Colonic mucosa (tissue), 4 donors: ENCODE measurements at regions of chr5 and their contacts with region 1.

Region 1: DNA sequence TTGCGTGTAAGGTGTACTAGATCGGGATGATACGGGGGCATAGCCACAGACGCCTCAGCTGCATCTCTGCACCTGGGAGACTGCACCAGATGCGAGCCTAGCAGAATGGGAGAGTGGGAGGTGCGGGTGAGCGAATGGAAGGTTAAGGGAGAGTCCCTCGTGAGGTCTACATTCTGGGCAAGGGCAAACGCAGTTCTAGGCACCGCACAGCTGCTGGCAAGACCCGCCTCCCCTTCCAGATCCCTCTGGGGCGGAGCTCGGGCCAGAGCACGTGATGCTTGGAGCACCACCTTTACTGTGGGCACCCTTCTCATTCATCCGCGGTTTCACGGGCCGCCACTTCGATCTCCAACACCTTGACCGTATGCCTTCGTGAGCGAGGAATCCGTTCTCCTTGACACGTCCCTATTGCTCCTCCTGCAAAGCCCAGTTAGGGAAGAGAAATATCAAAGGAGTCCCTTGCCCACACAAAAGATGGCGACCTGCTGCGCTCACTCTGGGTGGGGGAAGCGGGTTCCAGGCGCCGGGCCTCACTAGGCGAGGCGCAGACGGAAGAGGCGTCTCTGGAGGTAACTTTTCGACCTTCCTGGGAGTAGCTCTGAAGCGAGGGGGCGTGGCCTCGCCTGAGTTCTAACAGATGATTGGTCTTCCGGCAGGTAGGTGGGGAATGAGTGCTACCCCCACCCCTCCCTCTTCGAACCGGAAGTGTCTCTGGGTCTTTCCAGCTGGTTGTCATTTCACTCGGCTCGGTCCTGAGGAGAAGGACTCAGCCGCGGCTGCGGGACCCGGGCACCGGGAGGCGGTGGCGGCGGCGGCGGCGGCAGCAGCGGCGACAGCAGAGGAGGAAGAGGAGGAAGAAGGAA is at the start of gene CPEB4:
- DNase-seq: peak; percentile 99
- H3K4me3 ChIP-seq: peak within 1 kb of the TSS; percentile 80
- H3K27ac ChIP-seq: peak within 1 kb of the TSS; percentile 71
- H3K4me1 ChIP-seq: peaks cover 8% of the 10 kb centered on the region
- H3K27me3 ChIP-seq: no peaks in the 10 kb centered on the region
- CTCF ChIP-seq: no peak
- total RNA-seq, gene CPEB4: 23.3 to 41.7 TPM

Region 2: DNA sequence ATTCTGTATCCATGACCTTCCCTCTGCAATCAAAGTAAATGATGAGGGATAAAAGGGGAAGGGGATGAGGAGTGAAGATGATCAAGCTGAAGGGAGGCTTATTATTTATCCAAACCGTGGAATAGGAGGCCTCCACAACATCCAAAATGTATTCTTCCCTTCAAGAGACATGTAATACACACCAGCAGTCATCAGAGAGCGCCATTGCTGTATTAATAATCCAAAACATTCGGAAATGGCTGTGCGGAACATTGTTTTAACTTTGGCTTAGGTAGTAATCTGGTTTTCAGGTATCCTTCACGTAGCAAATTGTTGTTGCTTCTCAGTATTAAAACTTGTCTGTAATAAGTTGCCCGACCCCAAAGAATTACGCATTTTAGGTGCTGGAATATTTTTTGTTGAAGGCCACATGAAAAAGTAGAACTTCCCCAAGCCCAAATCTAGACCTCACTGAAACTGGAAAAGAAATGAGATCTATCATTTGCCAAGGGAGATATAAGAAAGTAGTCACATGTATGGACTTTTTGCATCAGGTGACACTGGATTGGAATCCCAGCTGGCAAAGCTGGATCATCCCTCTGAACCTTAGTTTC is 268.8 kb before region 1 on chr5:
- intact Hi-C with region 1: loop called (anchors 2 kb)
- DNase-seq: peak; percentile 57
- H3K4me3 ChIP-seq: no peak overlapping the region
- H3K27ac ChIP-seq: no peak overlapping the region
- H3K4me1 ChIP-seq: peaks cover 10% of the 10 kb centered on the region
- H3K27me3 ChIP-seq: no peaks in the 10 kb centered on the region
- CTCF ChIP-seq: peak; percentile 50

Region 3: GRCh38 chr5:173745123-173745522 is 142.7 kb before region 1 on chr5:
- intact Hi-C with region 1: no loop called
- DNase-seq: no peak
- H3K4me3 ChIP-seq: no peak overlapping the region
- H3K27ac ChIP-seq: no peak overlapping the region
- H3K4me1 ChIP-seq: no peaks in the 10 kb centered on the region
- H3K27me3 ChIP-seq: no peaks in the 10 kb centered on the region
- CTCF ChIP-seq: no peak

Region 4: DNA sequence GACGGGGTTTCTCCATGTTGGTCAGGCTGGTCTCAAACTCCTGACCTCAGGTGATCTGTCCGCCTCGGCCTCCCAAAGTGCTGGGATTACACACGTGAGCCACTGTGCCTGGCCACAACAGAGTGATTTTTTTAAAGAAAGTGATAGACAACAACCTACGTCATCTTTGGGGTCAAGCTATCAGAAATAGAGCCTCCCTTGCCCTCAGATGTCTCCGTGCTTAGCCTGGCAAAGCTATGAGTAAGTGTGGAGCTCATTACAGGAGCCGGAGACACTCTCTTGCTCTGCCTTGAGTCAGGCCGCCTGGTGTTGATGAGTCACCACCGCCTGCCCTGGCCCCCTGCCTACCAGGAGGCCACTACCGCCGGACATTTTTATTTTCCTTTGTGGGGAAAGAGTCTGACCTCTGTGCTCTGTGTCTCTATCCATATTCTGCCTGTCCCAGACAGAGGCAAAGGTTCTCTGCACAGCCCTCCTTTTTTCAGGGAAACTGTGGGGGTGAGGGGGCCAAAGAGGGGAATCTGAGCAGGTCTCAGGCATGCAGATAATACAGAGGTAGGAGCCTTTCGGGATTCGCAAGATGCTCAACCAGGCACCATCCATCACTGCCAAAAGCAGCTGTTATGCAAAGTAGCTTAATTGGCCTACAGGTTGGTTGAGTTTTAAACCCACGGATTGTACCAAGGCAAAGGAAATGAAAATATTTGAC is 123.4 kb before region 1 on chr5:
- intact Hi-C with region 1: loop called (anchors 10 kb)
- DNase-seq: peak; percentile 55
- H3K4me3 ChIP-seq: no peak overlapping the region
- H3K27ac ChIP-seq: no peak overlapping the region
- H3K4me1 ChIP-seq: no peaks in the 10 kb centered on the region
- H3K27me3 ChIP-seq: no peaks in the 10 kb centered on the region
- CTCF ChIP-seq: no peak

Region 5: DNA sequence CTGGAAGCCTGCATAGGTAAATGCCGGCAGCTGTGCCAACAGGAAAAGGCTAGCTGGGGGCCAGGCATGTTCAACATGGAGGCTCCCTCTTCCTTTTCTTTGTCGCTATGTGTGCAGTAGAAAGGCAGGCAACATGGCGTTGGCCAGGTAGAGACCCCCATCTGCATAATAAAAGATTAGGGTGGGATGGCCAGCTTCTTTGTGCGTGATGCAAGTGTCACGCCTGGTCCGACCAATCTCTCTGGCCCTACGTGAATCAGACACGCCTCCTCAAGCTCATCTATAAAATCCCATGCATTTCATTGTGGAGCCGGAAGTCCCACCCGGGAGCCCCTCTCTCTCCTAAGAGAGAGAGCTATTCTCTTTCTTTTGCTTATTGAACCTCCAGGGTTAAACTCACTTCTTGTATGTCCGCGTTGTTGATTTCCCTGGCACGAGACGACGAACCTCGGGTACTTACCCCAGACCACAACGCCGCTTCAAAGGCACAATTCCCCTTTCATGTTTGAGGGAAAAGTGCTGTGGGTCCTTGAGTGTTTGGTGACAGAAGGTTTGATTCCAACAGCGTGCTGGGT is 76.1 kb after region 1 on chr5:
- intact Hi-C with region 1: loop called (anchors 5 kb)
- DNase-seq: peak; percentile 49
- H3K4me3 ChIP-seq: peak overlapping the region; percentile 3
- H3K27ac ChIP-seq: no peak overlapping the region
- H3K4me1 ChIP-seq: no peaks in the 10 kb centered on the region
- H3K27me3 ChIP-seq: no peaks in the 10 kb centered on the region
- CTCF ChIP-seq: no peak

Region 6: DNA sequence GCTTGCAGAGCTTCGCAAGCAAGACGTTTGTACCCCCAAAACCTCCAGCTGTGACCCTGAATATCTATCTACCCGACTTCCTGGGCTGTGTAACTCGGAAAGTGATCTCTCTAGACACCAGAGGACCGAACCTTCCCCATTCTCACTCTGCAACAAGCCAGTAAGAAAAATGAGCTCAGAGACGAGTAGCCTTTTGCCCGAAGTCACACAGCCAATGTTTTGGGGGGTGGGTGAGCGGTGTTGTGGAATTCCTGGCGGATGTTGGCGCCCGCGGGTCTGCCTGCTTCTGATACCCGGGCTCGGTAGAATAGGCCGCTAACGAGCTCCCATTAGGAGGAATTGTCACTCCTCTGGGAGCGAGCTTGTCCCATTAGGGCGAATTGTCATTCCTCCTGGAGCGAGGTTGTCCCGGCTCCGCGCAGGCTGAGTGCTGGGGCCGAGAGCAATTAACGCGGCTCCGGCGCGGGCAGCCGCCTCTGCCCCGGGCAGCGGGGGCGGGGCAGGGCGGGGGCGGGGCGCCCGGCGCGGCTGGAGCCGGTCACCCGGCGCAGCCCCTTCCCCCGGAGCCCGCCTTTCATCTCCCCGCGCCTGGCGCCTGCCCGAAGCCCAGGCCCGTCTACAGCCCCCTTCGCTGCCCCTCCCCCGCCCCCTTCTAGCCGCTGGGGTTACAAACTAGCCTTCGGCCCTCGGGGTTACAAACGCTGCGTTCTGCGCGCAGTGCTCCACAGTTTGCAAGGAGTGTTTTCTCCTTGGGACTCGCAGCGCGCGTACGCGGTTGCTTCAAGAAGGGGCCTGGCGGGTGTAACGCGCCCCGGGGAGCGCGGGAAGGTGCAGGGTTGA is 833.0 kb after region 1 on chr5:
- intact Hi-C with region 1: no loop called
- DNase-seq: no peak
- H3K4me3 ChIP-seq: no peak overlapping the region
- H3K27ac ChIP-seq: no peak overlapping the region
- H3K4me1 ChIP-seq: no peaks in the 10 kb centered on the region
- H3K27me3 ChIP-seq: peaks cover 65% of the 10 kb centered on the region
- CTCF ChIP-seq: no peak